Activated CD4-positive, alpha-beta T cell treated with anti-CD3 and anti-CD28 coated beads for 36 hours (primary cell): ENCODE measurements at regions of chr14 and their contacts with region 1.

Region 1: GRCh38 chr14:52043690-52044089 is 25.2 kb downstream of the NID2 start:
- DNase-seq: peak; percentile 58
- ATAC-seq: peak; percentile 56
- H3K4me3 Mint-ChIP-seq: no peak overlapping the region
- H3K27ac Mint-ChIP-seq: no peak overlapping the region
- H3K4me1 Mint-ChIP-seq: peaks cover 19% of the 10 kb centered on the region
- H3K27me3 Mint-ChIP-seq: peaks cover 5% of the 10 kb centered on the region

Region 2: DNA sequence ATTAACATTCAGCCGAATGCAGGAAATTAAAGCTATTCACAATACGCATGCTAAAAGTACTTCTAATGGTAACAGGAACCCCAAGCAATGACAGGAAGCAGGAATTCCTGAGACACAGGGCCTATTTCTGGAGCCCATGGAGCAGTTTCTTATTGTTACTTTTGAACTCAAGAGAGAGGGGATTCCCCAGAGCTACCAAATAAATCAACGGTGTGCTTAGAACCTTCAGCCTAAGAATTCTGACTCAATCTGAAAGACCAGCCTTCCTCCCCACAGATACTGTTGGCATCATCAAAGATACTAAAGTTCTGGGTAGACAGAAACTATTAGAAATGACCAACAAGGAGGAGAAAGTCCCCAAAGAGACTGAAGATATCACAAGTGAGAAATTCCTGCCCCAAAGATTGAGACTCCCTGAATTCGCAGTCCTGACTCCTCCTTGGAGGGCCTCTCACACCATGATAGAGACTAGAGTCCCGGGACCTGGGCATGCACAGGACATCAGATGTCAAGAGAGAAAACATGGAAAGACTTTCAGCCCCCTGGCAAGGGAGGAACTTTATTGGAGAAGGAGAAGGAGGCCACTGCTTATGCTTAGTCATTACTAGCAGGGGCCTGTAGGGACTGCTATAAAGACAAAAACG is 21.6 kb before region 1 on chr14:
- CTCF ChIA-PET with region 1: no interaction called
- POLR2A ChIA-PET with region 1: no interaction called
- intact Hi-C with region 1: no loop called
- DNase-seq: no peak
- ATAC-seq: peak; percentile 94
- H3K4me3 Mint-ChIP-seq: no peak overlapping the region
- H3K27ac Mint-ChIP-seq: no peak overlapping the region
- H3K4me1 Mint-ChIP-seq: peaks cover 33% of the 10 kb centered on the region
- H3K27me3 Mint-ChIP-seq: peaks cover 3% of the 10 kb centered on the region

Region 3: DNA sequence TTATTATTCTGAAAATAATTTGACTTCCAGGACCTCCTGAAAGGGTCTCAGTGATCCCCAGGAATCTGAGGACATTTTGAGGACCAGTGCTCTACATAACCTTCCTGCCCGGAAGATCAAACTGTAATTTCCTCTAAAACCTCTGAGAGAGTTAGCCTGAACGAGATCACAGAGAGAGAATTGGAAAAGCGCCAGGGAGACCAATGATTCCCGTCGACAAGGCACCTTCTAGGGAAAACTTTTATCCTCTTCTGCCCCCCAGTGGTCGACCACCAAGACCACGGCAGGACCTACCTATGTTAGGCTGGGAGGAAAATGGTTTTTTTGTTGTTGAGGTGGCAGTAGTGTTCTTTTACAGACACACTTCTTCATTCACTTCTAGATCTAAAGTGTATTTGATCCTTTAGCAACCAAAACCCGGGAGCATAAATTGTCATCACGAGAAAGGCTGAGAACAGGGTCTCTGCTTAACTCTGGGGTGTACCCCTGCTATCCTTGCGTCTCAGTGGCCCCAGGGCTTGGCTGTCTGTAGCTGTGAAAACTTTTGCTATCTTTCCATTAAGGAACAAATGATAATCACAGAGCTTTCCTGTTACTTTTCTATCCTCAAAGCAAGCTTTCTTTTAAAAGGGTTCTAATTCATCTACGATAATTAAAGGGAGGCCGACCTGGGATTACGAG is 88.1 kb after region 1 on chr14:
- CTCF ChIA-PET with region 1: interaction called, 4 read pairs
- POLR2A ChIA-PET with region 1: no interaction called
- intact Hi-C with region 1: loop called in 1 of 2 experiments (anchors 10 kb)
- DNase-seq: peak; percentile 70
- ATAC-seq: peak; percentile 68
- H3K4me3 Mint-ChIP-seq: no peak overlapping the region
- H3K27ac Mint-ChIP-seq: no peak overlapping the region
- H3K4me1 Mint-ChIP-seq: peaks cover 7% of the 10 kb centered on the region
- H3K27me3 Mint-ChIP-seq: peaks cover 8% of the 10 kb centered on the region

Region 4: GRCh38 chr14:52272375-52272774 is 228.7 kb after region 1 on chr14:
- CTCF ChIA-PET with region 1: no interaction called
- POLR2A ChIA-PET with region 1: no interaction called
- intact Hi-C with region 1: loop called in 1 of 2 experiments (anchors 1 kb)
- DNase-seq: peak; percentile 37
- ATAC-seq: peak; percentile 27
- H3K4me3 Mint-ChIP-seq: no peak overlapping the region
- H3K27ac Mint-ChIP-seq: no peak overlapping the region
- H3K4me1 Mint-ChIP-seq: peaks cover 18% of the 10 kb centered on the region
- H3K27me3 Mint-ChIP-seq: peaks cover 30% of the 10 kb centered on the region

Region 5: GRCh38 chr14:52950898-52951689 is 907.4 kb after region 1 on chr14 and contains the start of gene FERMT2:
- CTCF ChIA-PET with region 1: no interaction called
- POLR2A ChIA-PET with region 1: no interaction called
- intact Hi-C with region 1: no loop called
- DNase-seq: peak; percentile 38
- ATAC-seq: peak; percentile 28
- H3K4me3 Mint-ChIP-seq: peak within 1 kb of the TSS; percentile 75
- H3K27ac Mint-ChIP-seq: peak within 1 kb of the TSS; percentile 20
- H3K4me1 Mint-ChIP-seq: peaks cover 24% of the 10 kb centered on the region
- H3K27me3 Mint-ChIP-seq: peaks cover 48% of the 10 kb centered on the region
- total RNA-seq, gene FERMT2: 2.1 to 3.6 TPM